ENCODE measurements at regions of chr3 and their contacts with region 1.

Region 1: DNA sequence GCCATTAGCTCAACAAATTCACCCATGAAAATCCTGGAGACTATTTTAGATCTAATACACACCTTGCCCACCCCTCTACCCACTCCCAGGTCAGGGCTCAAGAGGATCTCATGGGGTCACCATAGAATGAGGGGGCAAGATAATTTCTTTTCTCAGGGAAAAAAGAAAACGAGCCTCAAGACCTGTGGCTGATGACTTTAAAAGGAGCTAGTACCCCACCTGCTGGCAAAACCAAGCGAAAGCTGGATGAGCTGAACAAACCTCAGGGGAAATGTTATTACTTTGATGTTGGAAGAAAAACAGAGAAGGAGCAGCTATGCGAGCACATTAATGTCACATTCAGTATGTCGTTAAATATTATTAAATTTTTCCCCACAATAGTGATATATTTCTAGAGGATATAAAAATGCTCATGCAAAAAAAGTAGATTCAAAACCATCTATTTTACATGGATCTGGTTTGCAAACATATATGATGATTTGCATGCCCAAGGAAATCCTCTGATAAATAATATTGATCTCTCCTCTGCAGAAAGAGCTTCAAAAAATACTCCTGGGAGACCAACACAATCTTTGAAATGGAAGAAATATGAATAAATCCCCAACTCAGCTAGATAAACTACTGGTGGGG is 37.7 kb downstream of the PLD1 start:
- DNase-seq: peak in 33 of 35 experiments; percentile 7 to 64 (median 31)
- ATAC-seq: peak in 1 of 4 experiments; percentile 50
- H3K4me3 ChIP-seq: no peak overlapping the region
- H3K4me3 Mint-ChIP-seq: no peak overlapping the region
- H3K27ac ChIP-seq: no peak overlapping the region
- H3K27ac Mint-ChIP-seq: no peak overlapping the region
- H3K4me1 ChIP-seq: no peaks in the 10 kb centered on the region
- H3K4me1 Mint-ChIP-seq: peaks cover 0 to 12% (median 4%) of the 10 kb centered on the region in 3 donors
- H3K27me3 ChIP-seq: no peaks in the 10 kb centered on the region
- H3K27me3 Mint-ChIP-seq: peaks cover 0 to 3% of the 10 kb centered on the region in 2 donors

Region 2: GRCh38 chr3:170961616-170962400 is 810.7 kb before region 1 on chr3:
- CTCF ChIA-PET with region 1: interaction called, 20 to 24 read pairs
- POLR2A ChIA-PET with region 1: interaction called in 1 of 2 experiments, 3 read pairs
- DNase-seq: peak in 1 of 35 experiments; percentile 47
- ATAC-seq: no peak
- H3K4me3 ChIP-seq: no peak overlapping the region
- H3K4me3 Mint-ChIP-seq: no peak overlapping the region
- H3K27ac ChIP-seq: no peak overlapping the region
- H3K27ac Mint-ChIP-seq: no peak overlapping the region
- H3K4me1 ChIP-seq: no peaks in the 10 kb centered on the region
- H3K4me1 Mint-ChIP-seq: no peaks in the 10 kb centered on the region
- H3K27me3 ChIP-seq: no peaks in the 10 kb centered on the region
- H3K27me3 Mint-ChIP-seq: peaks cover 0 to 12% of the 10 kb centered on the region in 2 donors

Region 3: GRCh38 chr3:171049861-171050444 is 722.6 kb before region 1 on chr3:
- CTCF ChIA-PET with region 1: interaction called, 4 to 13 read pairs
- POLR2A ChIA-PET with region 1: no interaction called
- DNase-seq: peak in 25 of 35 experiments; percentile 2 to 54 (median 23)
- ATAC-seq: peak; percentile 45 to 60 (median 55)
- H3K4me3 ChIP-seq: no peak overlapping the region
- H3K4me3 Mint-ChIP-seq: no peak overlapping the region
- H3K27ac ChIP-seq: no peak overlapping the region
- H3K27ac Mint-ChIP-seq: no peak overlapping the region
- H3K4me1 ChIP-seq: no peaks in the 10 kb centered on the region
- H3K4me1 Mint-ChIP-seq: no peaks in the 10 kb centered on the region
- H3K27me3 ChIP-seq: peaks cover 0 to 5% of the 10 kb centered on the region in 2 experiments
- H3K27me3 Mint-ChIP-seq: peaks cover 4 to 26% of the 10 kb centered on the region in 2 donors

Measured in T-cell (primary cell).